Activated T-helper 2 cell treated with anti-CD3 and anti-CD28 coated beads, Interferon-gamma antibody, Interleukin-2, Interleukin-4, amounts not matched to agents 10 μg/mL and 5 μg/mL and 100 μg/mL, durations not matched to agents 14 hours and 24 hours and 36 hours (primary cell): ENCODE measurements at regions of chr7 and their contacts with region 1.

Region 1: GRCh38 chr7:116588641-116589594 is 64.1 kb downstream of the CAV1 start:
- DNase-seq: no peak
- H3K4me3 Mint-ChIP-seq: no peak overlapping the region
- H3K27ac Mint-ChIP-seq: peak overlapping the region; percentile 54
- H3K4me1 Mint-ChIP-seq: peaks cover 25% of the 10 kb centered on the region
- H3K27me3 Mint-ChIP-seq: peaks cover 24% of the 10 kb centered on the region

Region 2: DNA sequence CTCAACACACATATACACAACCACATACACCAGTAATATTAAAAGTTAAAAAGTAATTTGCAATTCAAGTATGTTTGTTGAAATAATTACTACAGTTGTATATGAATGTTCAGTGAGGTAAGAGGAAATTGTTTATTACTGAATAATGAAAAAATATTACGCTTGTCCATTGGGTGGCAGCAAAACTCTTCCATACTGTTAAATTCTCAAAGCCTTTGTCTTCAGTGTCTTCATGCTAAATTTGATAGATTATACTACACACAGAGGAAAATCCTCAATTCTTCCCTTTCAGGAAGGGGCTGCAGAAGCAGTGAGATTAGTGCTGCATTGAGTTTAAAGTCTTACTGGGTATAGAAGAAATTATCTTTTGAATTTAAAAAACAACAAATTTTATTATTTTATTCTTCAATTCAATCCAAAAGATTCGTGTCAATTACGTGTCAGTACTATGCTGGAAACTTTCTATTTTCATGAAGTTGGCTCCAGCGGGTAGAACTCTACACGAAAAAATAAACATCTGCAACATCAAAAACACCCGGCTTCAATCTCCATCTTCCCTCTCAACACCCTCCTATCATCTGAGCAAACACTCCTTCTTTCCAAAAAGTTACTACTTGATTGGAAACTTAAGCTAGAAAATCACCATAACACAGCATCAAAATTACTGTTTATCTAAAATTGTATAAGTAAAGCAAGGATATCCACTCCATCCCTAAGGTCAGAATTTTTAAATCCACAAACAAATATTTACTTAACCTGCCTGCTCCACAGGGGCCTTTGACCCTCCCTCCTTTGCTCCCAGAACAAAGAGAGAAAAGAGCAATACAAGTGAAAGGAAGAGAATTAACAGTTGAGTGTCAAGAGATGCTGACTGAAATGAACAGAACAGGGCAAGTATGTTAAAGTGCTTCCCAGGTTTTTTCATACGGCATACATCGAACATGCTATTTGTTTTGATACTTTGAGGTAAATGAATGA is 415.6 kb before region 1 on chr7:
- intact Hi-C with region 1: loop called (anchors 1 kb)
- DNase-seq: no peak
- H3K4me3 Mint-ChIP-seq: no peak overlapping the region
- H3K27ac Mint-ChIP-seq: no peak overlapping the region
- H3K4me1 Mint-ChIP-seq: peaks cover 3% of the 10 kb centered on the region
- H3K27me3 Mint-ChIP-seq: peaks cover 34% of the 10 kb centered on the region

Region 3: DNA sequence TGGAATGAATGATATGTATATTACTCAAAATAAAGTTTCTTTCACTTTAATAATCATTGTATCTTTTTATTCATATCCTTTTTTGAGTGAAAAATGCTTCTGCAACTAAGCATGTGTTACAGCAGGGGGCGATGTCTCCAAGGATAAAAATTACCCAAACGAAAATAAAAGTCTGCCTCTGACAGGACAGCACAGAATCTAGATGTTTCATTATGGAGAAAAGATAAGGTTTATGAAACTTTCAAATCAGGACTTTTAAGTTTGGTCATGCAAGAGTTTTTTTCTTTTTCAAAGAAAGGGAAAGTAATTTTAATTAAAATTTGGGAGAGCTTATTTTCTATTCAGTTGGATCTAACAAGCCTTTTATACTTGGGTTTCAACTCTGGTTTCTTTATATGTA is 330.2 kb before region 1 on chr7:
- intact Hi-C with region 1: loop called (anchors 1 kb)
- DNase-seq: no peak
- H3K4me3 Mint-ChIP-seq: no peak overlapping the region
- H3K27ac Mint-ChIP-seq: no peak overlapping the region
- H3K4me1 Mint-ChIP-seq: peaks cover 9% of the 10 kb centered on the region
- H3K27me3 Mint-ChIP-seq: peaks cover 5% of the 10 kb centered on the region

Region 4: DNA sequence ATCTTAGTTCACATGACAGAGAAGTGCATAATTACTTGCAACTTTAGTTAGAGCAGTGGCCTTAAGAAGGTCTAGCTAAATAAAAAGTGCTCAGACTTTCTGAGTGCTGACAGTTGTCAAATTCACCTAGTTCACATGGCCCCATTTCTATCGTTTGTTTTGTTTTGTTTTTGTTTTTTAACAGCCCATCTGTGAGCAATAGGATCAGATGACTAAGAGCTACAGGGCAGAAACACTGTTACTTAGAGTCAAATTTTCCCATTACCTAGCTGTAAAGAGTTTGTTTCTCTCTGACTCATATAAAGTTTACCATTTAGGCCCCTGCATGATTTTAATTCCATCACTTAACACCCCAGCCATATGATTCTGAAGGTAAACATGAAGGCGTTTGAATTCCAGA is 45.3 kb before region 1 on chr7:
- intact Hi-C with region 1: no loop called
- DNase-seq: no peak
- H3K4me3 Mint-ChIP-seq: no peak overlapping the region
- H3K27ac Mint-ChIP-seq: no peak overlapping the region
- H3K4me1 Mint-ChIP-seq: no peaks in the 10 kb centered on the region
- H3K27me3 Mint-ChIP-seq: peaks cover 33% of the 10 kb centered on the region

Region 5: DNA sequence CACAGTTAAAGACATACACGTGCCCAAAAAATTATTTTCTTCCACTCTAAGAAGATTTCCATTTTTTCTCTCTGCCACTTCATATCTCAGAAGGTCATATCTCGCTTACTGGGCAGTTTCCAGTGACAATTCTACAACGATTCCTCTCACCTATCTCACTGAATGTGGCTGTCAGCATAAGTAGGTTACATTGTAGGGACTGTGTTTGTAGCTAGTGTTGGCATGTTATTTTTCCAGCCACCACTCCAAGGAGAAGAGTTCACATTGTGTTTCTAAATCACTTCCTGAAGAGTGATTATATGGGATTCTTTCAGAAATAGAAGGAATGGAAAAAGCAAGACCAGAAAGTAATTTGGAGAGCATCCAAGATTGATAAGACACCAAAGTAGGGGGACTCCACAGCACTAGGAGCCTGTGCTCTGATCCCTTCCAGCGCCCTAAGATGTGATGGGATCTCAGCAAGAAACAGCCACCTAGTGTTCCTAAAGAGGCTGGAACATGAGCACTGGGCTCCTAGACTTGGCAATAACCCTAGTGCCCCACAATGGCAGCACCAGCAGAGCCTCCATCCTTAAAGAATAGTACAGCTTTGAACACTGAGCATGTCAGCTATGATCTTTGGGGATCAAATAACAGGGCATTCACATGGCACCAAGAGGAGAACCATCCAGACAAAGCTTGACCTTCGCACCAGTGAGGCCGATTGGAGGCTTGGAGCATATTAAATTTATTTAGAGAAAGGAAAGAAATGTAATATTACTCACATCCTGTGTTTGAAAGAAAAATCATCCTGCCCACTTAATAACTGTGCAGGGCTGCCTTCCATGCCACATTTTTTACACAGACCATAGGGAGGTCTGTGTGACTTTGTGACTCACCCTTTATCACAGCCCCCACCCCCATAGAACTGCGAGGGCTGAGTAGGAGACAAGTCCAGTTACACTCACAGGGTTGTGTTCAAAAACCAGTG is 12.3 kb before region 1 on chr7:
- intact Hi-C with region 1: no loop called
- DNase-seq: no peak
- H3K4me3 Mint-ChIP-seq: no peak overlapping the region
- H3K27ac Mint-ChIP-seq: no peak overlapping the region
- H3K4me1 Mint-ChIP-seq: peaks cover 17% of the 10 kb centered on the region
- H3K27me3 Mint-ChIP-seq: peaks cover 4% of the 10 kb centered on the region

Region 6: DNA sequence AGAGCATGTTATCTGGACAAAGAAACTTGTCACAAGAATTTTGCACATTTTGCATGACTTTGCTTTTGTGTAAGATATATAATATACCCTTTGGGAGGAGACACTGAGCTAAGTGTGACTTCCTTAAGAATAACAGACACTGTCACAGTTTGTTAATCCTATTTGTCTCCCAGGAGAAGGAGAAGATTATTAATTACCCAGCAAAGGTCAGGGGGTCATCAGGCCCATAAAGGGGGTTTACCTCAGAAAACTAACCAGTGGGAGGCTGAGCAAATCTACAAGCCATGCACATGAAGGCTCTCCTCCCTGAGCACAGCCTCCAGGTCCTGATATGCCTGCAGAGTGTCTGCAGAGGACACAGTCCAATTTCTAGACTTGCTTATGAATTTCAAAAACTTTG is 72.9 kb after region 1 on chr7:
- intact Hi-C with region 1: no loop called
- DNase-seq: no peak
- H3K4me3 Mint-ChIP-seq: no peak overlapping the region
- H3K27ac Mint-ChIP-seq: no peak overlapping the region
- H3K4me1 Mint-ChIP-seq: no peaks in the 10 kb centered on the region
- H3K27me3 Mint-ChIP-seq: peaks cover 28% of the 10 kb centered on the region

Region 7: DNA sequence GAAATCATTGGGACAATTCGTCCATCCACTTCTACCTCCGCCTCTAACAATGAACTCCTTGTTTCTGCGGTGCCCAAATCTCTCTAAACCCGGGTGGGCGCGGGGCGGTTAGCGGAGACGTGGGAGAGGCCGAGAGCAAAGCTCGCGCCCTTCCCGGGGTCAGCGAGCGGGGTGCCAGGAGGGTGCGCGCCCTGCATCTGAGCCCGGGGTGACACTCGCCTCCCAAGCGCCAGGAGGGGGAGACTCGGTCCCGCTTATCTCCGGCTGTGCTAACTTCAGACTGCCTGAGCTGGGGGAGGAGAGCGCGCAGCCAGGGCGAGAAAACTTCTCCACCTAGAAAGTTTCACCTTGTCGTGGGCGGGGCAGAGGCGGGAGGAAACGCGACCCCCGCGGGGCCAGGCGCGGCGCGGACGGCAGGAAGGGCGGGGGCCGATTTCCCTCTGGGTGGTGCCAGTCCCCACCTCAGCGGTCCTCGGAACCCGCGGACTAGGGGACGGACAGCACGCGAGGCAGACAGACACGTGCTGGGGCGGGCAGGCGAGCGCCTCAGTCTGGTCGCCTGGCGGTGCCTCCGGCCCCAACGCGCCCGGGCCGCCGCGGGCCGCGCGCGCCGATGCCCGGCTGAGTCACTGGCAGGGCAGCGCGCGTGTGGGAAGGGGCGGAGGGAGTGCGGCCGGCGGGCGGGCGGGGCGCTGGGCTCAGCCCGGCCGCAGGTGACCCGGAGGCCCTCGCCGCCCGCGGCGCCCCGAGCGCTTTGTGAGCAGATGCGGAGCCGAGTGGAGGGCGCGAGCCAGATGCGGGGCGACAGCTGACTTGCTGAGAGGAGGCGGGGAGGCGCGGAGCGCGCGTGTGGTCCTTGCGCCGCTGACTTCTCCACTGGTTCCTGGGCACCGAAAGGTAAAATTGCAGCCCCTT is 83.0 kb after region 1 on chr7 and contains the start of gene MET:
- intact Hi-C with region 1: loop called (anchors 5 kb)
- DNase-seq: peak; percentile 17
- H3K4me3 Mint-ChIP-seq: peak within 1 kb of the TSS; percentile 72
- H3K27ac Mint-ChIP-seq: peak within 1 kb of the TSS; percentile 43
- H3K4me1 Mint-ChIP-seq: peaks cover 7% of the 10 kb centered on the region
- H3K27me3 Mint-ChIP-seq: peaks cover 66% of the 10 kb centered on the region
- total RNA-seq, gene MET: 1.5 TPM in 2 replicates

Region 8: DNA sequence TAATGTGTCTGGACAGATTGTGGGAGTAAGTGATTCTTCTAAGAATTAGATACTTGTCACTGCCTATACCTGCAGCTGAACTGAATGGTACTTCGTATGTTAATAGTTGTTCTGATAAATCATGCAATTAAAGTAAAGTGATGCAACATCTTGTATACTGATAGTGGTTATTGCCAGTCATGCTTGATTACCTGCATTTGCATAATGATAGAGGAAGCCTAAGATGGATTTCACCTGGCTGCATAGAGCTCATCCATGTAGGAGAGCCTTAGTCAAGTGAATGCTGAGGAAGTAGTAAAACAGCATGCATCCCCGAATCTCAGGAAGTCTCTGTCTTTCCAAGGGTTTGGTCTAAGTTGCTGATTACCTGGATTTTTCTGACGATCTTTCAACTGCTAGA is 209.3 kb after region 1 on chr7:
- intact Hi-C with region 1: no loop called
- DNase-seq: no peak
- H3K4me3 Mint-ChIP-seq: no peak overlapping the region
- H3K27ac Mint-ChIP-seq: no peak overlapping the region
- H3K4me1 Mint-ChIP-seq: peaks cover 12% of the 10 kb centered on the region
- H3K27me3 Mint-ChIP-seq: peaks cover 9% of the 10 kb centered on the region

Region 9: DNA sequence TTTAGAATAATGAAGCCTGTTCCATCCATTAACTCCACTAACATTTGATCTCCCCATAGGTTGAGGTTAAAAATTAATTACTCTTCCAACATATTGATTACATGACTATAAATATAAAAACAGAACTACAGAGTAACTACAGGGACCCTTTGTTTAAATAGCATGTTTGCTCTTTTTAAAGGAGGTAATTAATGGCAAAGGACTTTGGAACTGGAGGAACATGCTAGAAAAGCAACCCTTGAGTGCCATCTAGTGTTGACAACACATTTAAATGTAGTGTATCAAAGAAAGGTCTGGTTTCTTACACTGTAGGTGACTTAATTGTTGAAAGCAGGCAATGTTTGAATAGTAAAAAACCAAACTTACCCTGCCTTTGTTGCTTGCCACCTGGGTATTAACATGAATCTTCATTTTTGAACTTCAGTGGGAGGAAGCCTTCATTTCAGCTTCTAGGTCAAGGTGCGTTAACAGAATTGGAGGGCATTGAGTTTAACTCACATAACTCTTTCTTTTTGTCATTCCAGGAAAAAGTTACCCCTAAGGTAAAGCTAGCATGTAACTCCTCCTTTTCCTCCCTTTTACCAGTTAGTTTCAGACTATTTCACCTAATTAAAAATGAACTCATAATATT is 220.8 kb after region 1 on chr7:
- intact Hi-C with region 1: loop called (anchors 1 kb)
- DNase-seq: no peak
- H3K4me3 Mint-ChIP-seq: no peak overlapping the region
- H3K27ac Mint-ChIP-seq: no peak overlapping the region
- H3K4me1 Mint-ChIP-seq: peaks cover 3% of the 10 kb centered on the region
- H3K27me3 Mint-ChIP-seq: peaks cover 18% of the 10 kb centered on the region